Calu3 (cell line): ENCODE measurements at regions of chr15 and their contacts with region 1.

Region 1: GRCh38 chr15:59410391-59410896 is 27.5 kb upstream of the FAM81A start:
- DNase-seq: peak; percentile 73
- H3K4me3 Mint-ChIP-seq: peak overlapping the region; percentile 53
- H3K27ac Mint-ChIP-seq: peak overlapping the region; percentile 71
- H3K4me1 Mint-ChIP-seq: peaks cover 56% of the 10 kb centered on the region
- H3K27me3 Mint-ChIP-seq: no peaks in the 10 kb centered on the region
- CTCF ChIP-seq: no peak

Region 2: GRCh38 chr15:58690703-58691102 is 719.7 kb before region 1 on chr15:
- CTCF ChIA-PET with region 1: no interaction called
- intact Hi-C with region 1: no loop called
- DNase-seq: no peak
- H3K4me3 Mint-ChIP-seq: no peak overlapping the region
- H3K27ac Mint-ChIP-seq: no peak overlapping the region
- H3K4me1 Mint-ChIP-seq: peaks cover 18% of the 10 kb centered on the region
- H3K27me3 Mint-ChIP-seq: no peaks in the 10 kb centered on the region
- CTCF ChIP-seq: no peak

Region 3: DNA sequence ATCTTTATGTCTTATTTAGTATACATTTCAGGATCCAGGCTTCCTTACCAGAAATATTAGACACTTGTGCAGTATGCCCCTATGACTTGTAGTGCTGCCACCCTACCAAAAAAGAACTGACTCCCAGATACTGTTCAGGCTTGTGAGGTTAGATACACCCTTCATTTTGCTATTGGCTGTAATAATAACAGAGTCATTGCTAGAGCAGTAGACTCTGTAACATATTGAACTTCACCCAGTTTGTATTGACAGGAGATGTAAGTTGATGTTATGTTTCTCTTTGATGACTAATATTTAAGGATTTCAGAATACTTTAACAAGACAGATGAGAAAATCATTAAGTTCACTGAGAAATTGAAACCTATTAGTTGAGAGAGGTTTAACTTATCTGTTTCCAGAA is 390.1 kb before region 1 on chr15:
- CTCF ChIA-PET with region 1: no interaction called
- intact Hi-C with region 1: no loop called
- DNase-seq: no peak
- H3K4me3 Mint-ChIP-seq: no peak overlapping the region
- H3K27ac Mint-ChIP-seq: no peak overlapping the region
- H3K4me1 Mint-ChIP-seq: no peaks in the 10 kb centered on the region
- H3K27me3 Mint-ChIP-seq: no peaks in the 10 kb centered on the region
- CTCF ChIP-seq: no peak

Region 4: DNA sequence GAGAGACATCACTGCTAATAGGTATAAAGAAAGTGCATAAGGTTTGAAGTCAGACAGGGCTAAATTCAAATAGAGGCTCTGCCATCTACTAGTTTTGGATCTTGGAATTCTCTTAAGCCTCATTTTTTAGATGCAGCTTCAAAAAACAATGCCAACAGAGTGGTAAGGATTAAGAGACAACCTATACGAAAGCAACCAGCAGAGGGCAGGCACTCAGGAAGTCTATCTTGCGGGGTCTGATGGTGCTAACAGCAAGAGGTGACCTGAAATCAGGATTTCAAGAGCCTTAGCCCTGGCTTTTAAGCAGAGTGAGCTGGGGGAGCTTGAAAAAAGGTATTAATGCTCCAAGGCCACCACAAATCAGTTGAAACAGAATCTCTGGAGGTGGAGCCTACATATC is 163.1 kb before region 1 on chr15:
- CTCF ChIA-PET with region 1: interaction called, 6 read pairs
- intact Hi-C with region 1: loop called (anchors 5 kb)
- DNase-seq: peak; percentile 69
- H3K4me3 Mint-ChIP-seq: no peak overlapping the region
- H3K27ac Mint-ChIP-seq: peak overlapping the region; percentile 69
- H3K4me1 Mint-ChIP-seq: peaks cover 88% of the 10 kb centered on the region
- H3K27me3 Mint-ChIP-seq: no peaks in the 10 kb centered on the region
- CTCF ChIP-seq: peak; percentile 44